ENCODE measurements at regions of chr1 and their contacts with region 1.

Region 1: GRCh38 chr1:38990738-38991639 is at the start of gene AKIRIN1:
- DNase-seq: peak; percentile 86 to 100
- H3K4me3 ChIP-seq: peak within 1 kb of the TSS; percentile 90
- H3K27ac ChIP-seq: peak within 1 kb of the TSS; percentile 33; the same call in 1 of the 2 replicates
- H3K4me1 ChIP-seq: peaks cover 37% of the 10 kb centered on the region
- H3K27me3 ChIP-seq: no peaks in the 10 kb centered on the region
- CTCF ChIP-seq: 0 out of 2 replicates have a peak, but pooled peaks have one; percentile 21
- total RNA-seq, gene AKIRIN1: 76.9 and 80.0 TPM in 2 replicates

Region 2: DNA sequence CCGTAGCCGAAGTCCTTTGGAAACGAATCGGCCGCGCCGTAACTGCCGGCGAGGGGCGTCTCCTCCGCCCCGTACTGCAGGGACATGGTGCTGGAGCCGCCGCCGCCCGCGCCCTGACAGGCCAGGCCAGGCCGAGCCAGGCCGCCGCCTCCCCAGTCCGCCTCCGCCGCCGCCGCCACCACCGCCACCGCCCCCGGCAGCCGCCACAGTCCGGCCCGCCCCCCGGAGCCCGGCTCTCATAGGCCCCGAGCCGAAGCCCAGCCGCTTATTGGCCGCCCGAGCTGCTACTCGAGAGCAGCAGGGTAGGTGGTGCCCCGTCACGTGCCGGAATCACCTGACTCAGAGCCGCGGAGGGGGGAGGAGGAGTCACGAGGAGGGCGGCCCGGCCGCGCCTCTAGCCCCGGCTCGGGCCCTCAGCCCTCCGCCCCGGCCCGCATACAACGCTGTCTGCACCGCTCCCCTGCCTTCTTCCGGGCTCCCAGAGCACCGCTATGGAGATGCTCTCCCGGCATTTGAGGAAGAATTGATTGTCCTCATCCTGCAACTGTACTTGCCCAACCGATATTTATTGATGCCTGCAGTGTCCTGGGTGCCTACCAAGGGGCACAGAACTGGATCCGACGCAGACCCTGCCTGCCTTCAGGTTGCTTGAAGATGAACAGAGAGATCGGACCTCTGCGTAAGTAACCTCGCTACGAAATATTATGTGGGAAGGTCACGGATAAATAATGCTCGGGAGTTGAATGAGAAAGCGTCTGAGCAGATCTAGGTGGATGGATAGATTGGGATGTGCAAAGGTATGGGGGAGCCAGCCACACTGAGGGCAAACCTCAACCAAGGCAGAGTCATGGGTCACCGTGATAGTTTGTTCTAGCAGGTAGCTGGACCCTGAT is 131.2 kb before region 1 on chr1 and contains the start of gene RRAGC:
- CTCF ChIA-PET with region 1: no interaction called
- POLR2A ChIA-PET with region 1: no interaction called
- intact Hi-C with region 1: loop called (anchors 1 kb)
- DNase-seq: peak; percentile 92 to 100
- H3K4me3 ChIP-seq: peak within 1 kb of the TSS; percentile 72
- H3K27ac ChIP-seq: peak within 1 kb of the TSS; percentile 59
- H3K4me1 ChIP-seq: peaks cover 23% of the 10 kb centered on the region
- H3K27me3 ChIP-seq: no peaks in the 10 kb centered on the region
- CTCF ChIP-seq: no peak
- total RNA-seq, gene RRAGC: 22.1 and 33.0 TPM in 2 replicates

Region 3: GRCh38 chr1:38873027-38873969 is 117.7 kb before region 1 on chr1 and contains the start of gene MYCBP:
- CTCF ChIA-PET with region 1: no interaction called
- POLR2A ChIA-PET with region 1: interaction called, 8 read pairs
- intact Hi-C with region 1: loop called (anchors 1 kb)
- DNase-seq: peak; percentile 89 to 99
- H3K4me3 ChIP-seq: peak within 1 kb of the TSS; percentile 88
- H3K27ac ChIP-seq: no peak within 1 kb of the TSS
- H3K4me1 ChIP-seq: peaks cover 15% of the 10 kb centered on the region
- H3K27me3 ChIP-seq: no peaks in the 10 kb centered on the region
- CTCF ChIP-seq: peak; percentile 37; the same call in 1 of the 2 replicates
- total RNA-seq, gene MYCBP: 51.9 TPM in 2 replicates

Region 4: GRCh38 chr1:38919130-38919529 is 71.9 kb before region 1 on chr1:
- CTCF ChIA-PET with region 1: no interaction called
- POLR2A ChIA-PET with region 1: no interaction called
- intact Hi-C with region 1: no loop called
- DNase-seq: no peak
- H3K4me3 ChIP-seq: no peak overlapping the region
- H3K27ac ChIP-seq: no peak overlapping the region
- H3K4me1 ChIP-seq: no peaks in the 10 kb centered on the region
- H3K27me3 ChIP-seq: no peaks in the 10 kb centered on the region
- CTCF ChIP-seq: no peak

Region 5: DNA sequence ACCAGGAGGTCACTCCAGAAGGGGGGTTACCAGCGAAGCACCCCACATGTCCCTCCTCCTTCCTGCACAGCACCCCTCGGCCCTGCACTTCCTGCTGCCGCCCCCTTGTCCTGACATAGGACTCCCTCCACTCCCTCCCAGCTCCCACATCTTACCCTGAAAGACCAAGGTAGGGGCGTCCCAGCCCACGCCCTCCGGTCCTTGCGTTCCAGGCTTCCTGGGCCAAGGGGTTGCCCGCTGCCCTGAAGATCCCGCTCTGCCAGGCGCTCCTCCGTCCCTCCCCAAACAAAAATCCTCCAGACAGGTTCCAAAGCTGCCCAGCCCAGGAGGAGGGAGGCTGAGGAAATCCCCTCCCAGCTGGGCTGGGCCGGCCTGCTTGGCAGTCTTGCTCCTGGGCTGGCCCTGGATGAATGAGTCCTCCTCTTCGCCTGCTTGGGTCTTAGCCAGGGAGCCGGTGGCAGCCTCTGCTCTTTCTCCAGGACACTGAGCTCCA is 49.4 kb before region 1 on chr1 and contains the start of gene RHBDL2:
- CTCF ChIA-PET with region 1: no interaction called
- POLR2A ChIA-PET with region 1: interaction called, 3 read pairs
- intact Hi-C with region 1: loop called (anchors 1 kb)
- DNase-seq: peak; percentile 71 to 87
- H3K4me3 ChIP-seq: peak within 1 kb of the TSS; percentile 66
- H3K27ac ChIP-seq: no peak within 1 kb of the TSS
- H3K4me1 ChIP-seq: peaks cover 5% of the 10 kb centered on the region; the same call in 1 of the 2 replicates
- H3K27me3 ChIP-seq: no peaks in the 10 kb centered on the region
- CTCF ChIP-seq: no peak
- total RNA-seq, gene RHBDL2: 31.6 and 36.9 TPM in 2 replicates

Region 6: GRCh38 chr1:38953433-38953860 is 37.5 kb before region 1 on chr1:
- CTCF ChIA-PET with region 1: no interaction called
- POLR2A ChIA-PET with region 1: interaction called, 10 read pairs
- intact Hi-C with region 1: no loop called
- DNase-seq: no peak
- H3K4me3 ChIP-seq: no peak overlapping the region
- H3K27ac ChIP-seq: peak overlapping the region; percentile 54
- H3K4me1 ChIP-seq: peaks cover 39% of the 10 kb centered on the region
- H3K27me3 ChIP-seq: no peaks in the 10 kb centered on the region
- CTCF ChIP-seq: no peak

Region 7: DNA sequence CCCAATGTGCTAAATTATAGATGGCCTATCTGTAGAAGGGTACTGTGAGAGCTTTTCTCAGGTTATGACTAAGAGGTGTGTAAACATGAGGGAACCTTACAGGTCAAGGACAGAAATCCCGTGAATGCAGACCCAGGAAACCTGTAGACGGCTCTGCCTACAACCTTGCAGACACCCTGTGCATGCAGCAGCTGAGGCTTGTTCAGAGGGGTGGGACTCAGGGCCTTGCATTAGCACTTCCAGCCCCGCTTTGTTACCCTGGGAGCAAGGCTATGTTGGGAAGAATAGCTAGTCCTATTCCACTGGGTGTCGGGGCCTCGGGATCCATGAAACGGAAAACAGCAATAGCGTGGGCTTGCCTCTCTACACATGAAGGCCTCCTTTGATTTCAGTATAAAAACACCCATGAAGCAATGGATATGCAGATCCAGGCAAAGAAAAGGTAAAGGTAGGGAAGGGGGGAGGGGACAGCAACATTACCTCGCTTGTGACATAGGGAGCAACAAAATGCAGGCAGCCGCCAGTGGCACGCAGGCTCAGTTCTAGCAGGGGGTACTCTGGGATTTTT is 25.7 kb after region 1 on chr1:
- CTCF ChIA-PET with region 1: no interaction called
- POLR2A ChIA-PET with region 1: interaction called, 14 read pairs
- intact Hi-C with region 1: no loop called
- DNase-seq: no peak
- H3K4me3 ChIP-seq: no peak overlapping the region
- H3K27ac ChIP-seq: no peak overlapping the region
- H3K4me1 ChIP-seq: 0 out of 2 replicates have a peak, but pooled peaks cover 5% of the 10 kb centered on the region
- H3K27me3 ChIP-seq: no peaks in the 10 kb centered on the region
- CTCF ChIP-seq: no peak

Region 8: GRCh38 chr1:39026051-39026865 is 35.3 kb after region 1 on chr1 and contains the start of gene NDUFS5:
- CTCF ChIA-PET with region 1: no interaction called
- POLR2A ChIA-PET with region 1: interaction called, 8 read pairs
- intact Hi-C with region 1: loop called (anchors 5 kb)
- DNase-seq: peak; percentile 83 to 89
- H3K4me3 ChIP-seq: peak within 1 kb of the TSS; percentile 86
- H3K27ac ChIP-seq: peak within 1 kb of the TSS; percentile 81
- H3K4me1 ChIP-seq: peaks cover 6% of the 10 kb centered on the region
- H3K27me3 ChIP-seq: no peaks in the 10 kb centered on the region
- CTCF ChIP-seq: no peak
- total RNA-seq, gene NDUFS5: 498 and 524 TPM in 2 replicates

Measured in PC-9 (cell line).